PC-3 (cell line): ENCODE measurements at regions of chr3 and their contacts with region 1.

Region 1: GRCh38 chr3:145849115-145849514 is 311.9 kb downstream of the PLOD2 start:
- DNase-seq: no peak
- ATAC-seq: no peak
- H3K4me3 ChIP-seq: no peak overlapping the region
- H3K27ac ChIP-seq: no peak overlapping the region
- H3K4me1 ChIP-seq: no peaks in the 10 kb centered on the region
- H3K27me3 ChIP-seq: no peaks in the 10 kb centered on the region
- CTCF ChIP-seq: no peak

Region 2: DNA sequence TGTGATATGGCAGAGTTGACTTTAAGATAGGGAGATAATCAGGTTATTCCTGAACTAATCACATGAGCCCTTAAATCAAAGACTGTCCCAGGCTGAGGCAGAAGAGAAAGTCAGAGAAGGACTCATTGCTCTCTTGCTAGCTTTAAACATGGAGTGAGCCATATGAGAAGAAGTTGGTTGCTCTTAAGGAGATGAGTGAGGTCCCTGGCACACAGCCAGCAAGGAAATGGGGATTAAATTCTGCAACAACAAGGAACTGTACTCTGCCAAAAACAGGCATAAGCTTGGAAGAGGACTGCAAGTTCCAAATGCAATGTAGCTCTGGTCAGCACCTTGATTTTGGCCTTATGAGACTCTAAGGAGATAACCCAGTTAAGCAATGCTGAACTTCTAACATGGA is 145.1 kb before region 1 on chr3:
- CTCF ChIA-PET with region 1: no interaction called
- POLR2A ChIA-PET with region 1: no interaction called
- intact Hi-C with region 1: no loop called
- DNase-seq: no peak
- ATAC-seq: no peak
- H3K4me3 ChIP-seq: no peak overlapping the region
- H3K27ac ChIP-seq: no peak overlapping the region
- H3K4me1 ChIP-seq: no peaks in the 10 kb centered on the region
- H3K27me3 ChIP-seq: no peaks in the 10 kb centered on the region
- CTCF ChIP-seq: no peak

Region 3: GRCh38 chr3:145991119-145991518 is 142.0 kb after region 1 on chr3:
- CTCF ChIA-PET with region 1: no interaction called
- POLR2A ChIA-PET with region 1: no interaction called
- intact Hi-C with region 1: no loop called
- DNase-seq: no peak
- ATAC-seq: no peak
- H3K4me3 ChIP-seq: no peak overlapping the region
- H3K27ac ChIP-seq: no peak overlapping the region
- H3K4me1 ChIP-seq: no peaks in the 10 kb centered on the region
- H3K27me3 ChIP-seq: no peaks in the 10 kb centered on the region
- CTCF ChIP-seq: no peak

Region 4: DNA sequence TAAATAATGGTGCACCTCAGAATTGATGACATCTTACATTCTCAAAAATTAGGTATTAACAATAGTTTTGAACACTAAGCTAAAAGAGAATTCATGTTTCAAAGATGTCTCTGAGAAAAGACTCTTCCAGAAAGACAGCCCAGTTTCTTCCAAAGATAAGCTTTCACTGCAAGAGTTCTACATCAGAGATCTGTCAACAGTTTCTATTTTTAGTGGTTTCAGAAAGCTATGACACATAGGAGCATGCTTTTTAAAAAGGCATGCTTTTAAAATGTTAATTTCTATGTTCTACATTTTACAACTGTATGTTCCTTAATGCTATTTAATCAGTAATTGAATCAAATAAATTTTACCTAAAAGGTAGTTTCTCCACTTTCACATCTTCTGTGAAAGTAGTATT is 223.7 kb after region 1 on chr3:
- CTCF ChIA-PET with region 1: no interaction called
- POLR2A ChIA-PET with region 1: no interaction called
- intact Hi-C with region 1: no loop called
- DNase-seq: no peak
- ATAC-seq: no peak
- H3K4me3 ChIP-seq: no peak overlapping the region
- H3K27ac ChIP-seq: no peak overlapping the region
- H3K4me1 ChIP-seq: peaks cover 28% of the 10 kb centered on the region
- H3K27me3 ChIP-seq: no peaks in the 10 kb centered on the region
- CTCF ChIP-seq: no peak

Region 5: DNA sequence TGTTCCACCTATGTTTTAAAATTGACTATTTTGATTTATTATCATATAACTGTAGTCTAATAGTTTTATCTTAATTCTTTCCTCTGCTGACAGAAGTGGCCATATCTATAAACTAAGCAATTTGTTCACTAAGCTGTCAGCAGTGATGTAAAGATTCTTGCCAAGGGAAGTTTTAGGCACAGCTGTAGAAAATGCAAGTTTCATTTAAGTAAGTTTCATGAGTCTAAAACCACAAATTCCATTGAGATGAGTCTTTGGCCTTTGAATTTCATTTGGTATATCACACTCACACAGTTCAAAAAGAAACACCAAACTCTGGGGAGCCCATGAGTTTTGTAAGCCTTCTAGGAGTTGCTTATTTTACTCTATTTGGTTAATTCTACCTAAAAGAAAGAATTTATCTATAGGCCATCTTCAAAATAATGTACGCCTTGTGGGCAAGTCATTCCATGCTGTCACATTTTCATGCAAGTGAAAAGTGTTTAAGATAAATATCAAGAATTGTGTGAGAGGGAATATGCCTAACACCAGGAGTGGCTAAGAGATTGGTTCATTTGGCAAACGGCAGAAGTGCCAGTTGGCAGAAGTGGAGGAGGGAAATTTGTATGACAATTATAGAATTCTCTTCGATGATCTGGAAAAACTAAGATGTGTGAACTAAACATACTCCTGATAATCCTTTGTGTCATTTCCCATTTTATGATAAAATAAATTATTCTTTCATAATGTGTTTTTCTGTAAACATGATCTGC is 1264.4 kb after region 1 on chr3:
- CTCF ChIA-PET with region 1: no interaction called
- POLR2A ChIA-PET with region 1: no interaction called
- intact Hi-C with region 1: loop called (anchors 5 kb)
- DNase-seq: peak; percentile 59
- ATAC-seq: peak; percentile 38
- H3K4me3 ChIP-seq: no peak overlapping the region
- H3K27ac ChIP-seq: no peak overlapping the region
- H3K4me1 ChIP-seq: peaks cover 4% of the 10 kb centered on the region; the same call in 1 of the 2 replicates
- H3K27me3 ChIP-seq: no peaks in the 10 kb centered on the region
- CTCF ChIP-seq: no peak